ENCODE measurements at regions of chr1 and their contacts with region 1.

Region 1: GRCh38 chr1:116151739-116152576 is 40.8 kb downstream of the MAB21L3 start:
- DNase-seq: peak; percentile 47 to 92 (median 80)

Region 2: GRCh38 chr1:116377541-116378529 is 225.9 kb after region 1 on chr1:
- intact Hi-C with region 1: loop called (anchors 5 kb)
- DNase-seq: peak; percentile 45 to 88 (median 72)

Region 3: GRCh38 chr1:116418091-116418830 is 266.3 kb after region 1 on chr1:
- intact Hi-C with region 1: loop called (anchors 5 kb)
- DNase-seq: peak; percentile 56 to 93 (median 86)

Region 4: GRCh38 chr1:116498789-116499628 is 347.1 kb after region 1 on chr1:
- intact Hi-C with region 1: loop called (anchors 5 kb)
- DNase-seq: peak in 40 of 42 donors; percentile 31 to 89 (median 72)